ENCODE measurements at regions of chr20 and their contacts with region 1.

Region 1: DNA sequence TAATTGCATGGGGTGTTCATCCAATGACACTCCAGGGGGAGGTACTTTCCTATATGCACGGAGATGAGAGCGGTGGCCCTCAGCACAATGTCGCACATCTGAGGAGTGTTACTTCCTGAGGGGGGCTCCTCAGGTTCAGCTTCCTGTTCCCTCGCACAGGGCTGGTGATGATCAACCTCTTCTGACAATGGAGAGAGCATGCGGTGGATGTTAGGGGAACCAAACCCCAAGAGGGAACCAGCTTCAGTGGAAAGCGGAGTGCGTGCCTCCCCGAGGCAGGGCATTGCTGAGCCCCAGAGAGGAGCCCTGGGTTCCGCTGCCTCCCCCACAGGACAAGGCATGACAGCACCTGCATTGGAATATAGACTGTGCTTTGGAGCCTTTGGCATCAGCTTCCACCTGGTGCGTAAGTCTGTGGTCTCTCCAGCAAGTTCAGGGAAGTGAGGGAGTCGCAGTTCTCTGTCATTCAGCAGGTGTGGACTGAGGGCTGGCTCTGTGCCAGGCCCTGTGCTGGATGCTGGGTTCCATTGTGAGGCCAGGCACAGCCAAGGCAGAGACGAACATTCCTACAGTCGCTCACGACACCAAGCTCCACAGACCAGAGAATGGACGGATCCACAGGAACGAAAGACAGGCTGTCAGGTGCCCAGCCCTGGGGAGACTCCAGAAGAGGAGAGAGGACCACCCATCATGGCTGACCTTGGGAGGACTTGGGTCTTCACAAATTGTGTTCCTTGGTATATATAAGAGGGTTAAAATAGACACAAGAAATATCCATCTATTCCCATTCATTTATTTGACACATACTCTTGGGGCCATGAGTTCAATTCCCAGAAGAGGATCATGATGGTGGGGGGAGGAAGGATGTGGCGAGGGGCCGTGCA is 3.9 kb upstream of the ZNF831 start:
- DNase-seq: peak; percentile 47 to 93 (median 66)
- ATAC-seq: peak; percentile 81
- H3K4me3 ChIP-seq: peak overlapping the region; percentile 70
- H3K4me3 Mint-ChIP-seq: peak overlapping the region; percentile 89
- H3K27ac ChIP-seq: peak overlapping the region; percentile 94 to 95
- H3K27ac Mint-ChIP-seq: peak overlapping the region; percentile 95
- H3K4me1 ChIP-seq: peaks cover 68% of the 10 kb centered on the region
- H3K4me1 Mint-ChIP-seq: peaks cover 98% of the 10 kb centered on the region
- H3K27me3 ChIP-seq: no peaks in the 10 kb centered on the region
- H3K27me3 Mint-ChIP-seq: no peaks in the 10 kb centered on the region
- CTCF ChIP-seq: no peak

Region 2: DNA sequence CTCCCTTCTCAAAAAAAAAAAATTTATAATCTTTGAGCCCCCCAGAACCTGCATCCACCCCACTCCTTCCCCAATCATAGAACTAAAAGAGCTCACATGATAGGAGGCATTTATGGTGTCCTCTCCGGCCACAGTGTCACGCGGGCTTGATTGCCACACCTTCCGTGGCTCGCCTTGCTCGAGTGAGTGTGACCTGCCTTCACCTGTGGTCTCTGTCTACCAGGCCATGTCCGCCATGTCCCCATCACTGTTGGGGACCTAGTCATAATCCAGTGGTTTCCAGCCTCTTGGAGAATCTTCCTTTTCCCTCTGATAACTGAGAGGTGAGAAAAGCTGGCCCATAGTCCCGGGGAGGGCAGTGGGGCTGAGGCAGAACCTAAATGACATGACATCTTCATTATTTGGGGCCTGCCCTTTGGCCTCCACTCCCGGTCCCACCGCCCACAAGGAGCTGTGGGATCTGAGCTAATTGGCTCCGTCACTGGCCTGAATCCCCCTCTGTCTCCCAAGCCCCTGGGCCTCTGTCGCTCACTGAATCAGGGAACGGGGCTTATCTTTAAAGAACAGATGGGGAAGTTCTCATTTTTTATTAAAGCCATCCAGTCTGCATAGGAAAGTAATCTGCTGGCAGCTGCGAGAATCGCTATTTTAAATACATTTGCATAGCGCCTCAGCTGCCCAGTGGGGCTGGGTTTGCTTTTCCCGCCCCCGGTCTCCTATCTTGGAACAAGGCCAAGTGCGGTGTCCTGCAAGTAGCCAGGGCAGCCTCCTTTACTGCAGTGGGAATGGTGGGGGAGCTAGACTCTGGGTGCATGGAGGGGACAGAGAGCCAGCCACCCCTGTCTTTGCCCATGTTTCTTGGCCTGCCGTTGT is 1252.4 kb before region 1 on chr20:
- CTCF ChIA-PET with region 1: no interaction called
- POLR2A ChIA-PET with region 1: no interaction called
- intact Hi-C with region 1: no loop called
- DNase-seq: no peak
- ATAC-seq: no peak
- H3K4me3 ChIP-seq: no peak overlapping the region
- H3K4me3 Mint-ChIP-seq: no peak overlapping the region
- H3K27ac ChIP-seq: no peak overlapping the region
- H3K27ac Mint-ChIP-seq: no peak overlapping the region
- H3K4me1 ChIP-seq: no peaks in the 10 kb centered on the region
- H3K4me1 Mint-ChIP-seq: no peaks in the 10 kb centered on the region
- H3K27me3 ChIP-seq: peaks cover 5 to 11% of the 10 kb centered on the region in 2 experiments
- H3K27me3 Mint-ChIP-seq: peaks cover 42% of the 10 kb centered on the region
- CTCF ChIP-seq: no peak

Region 3: GRCh38 chr20:59177261-59178250 is 17.8 kb after region 1 on chr20:
- CTCF ChIA-PET with region 1: interaction called, 4 read pairs
- POLR2A ChIA-PET with region 1: interaction called, 32 read pairs
- intact Hi-C with region 1: loop called in 1 of 2 experiments (anchors 2 kb)
- DNase-seq: peak in 4 of 14 experiments; percentile 43 to 82 (median 60)
- ATAC-seq: peak; percentile 68
- H3K4me3 ChIP-seq: peak overlapping the region; percentile 9
- H3K4me3 Mint-ChIP-seq: peak overlapping the region; percentile 35
- H3K27ac ChIP-seq: peak overlapping the region; percentile 33 to 70
- H3K27ac Mint-ChIP-seq: peak overlapping the region; percentile 82
- H3K4me1 ChIP-seq: peaks cover 73% of the 10 kb centered on the region
- H3K4me1 Mint-ChIP-seq: peaks cover 92% of the 10 kb centered on the region
- H3K27me3 ChIP-seq: no peaks in the 10 kb centered on the region
- H3K27me3 Mint-ChIP-seq: no peaks in the 10 kb centered on the region
- CTCF ChIP-seq: no peak

Measured in CD4-positive, alpha-beta T cell (primary cell).